ENCODE measurements at regions of chr16 and their contacts with region 1.

Region 1: DNA sequence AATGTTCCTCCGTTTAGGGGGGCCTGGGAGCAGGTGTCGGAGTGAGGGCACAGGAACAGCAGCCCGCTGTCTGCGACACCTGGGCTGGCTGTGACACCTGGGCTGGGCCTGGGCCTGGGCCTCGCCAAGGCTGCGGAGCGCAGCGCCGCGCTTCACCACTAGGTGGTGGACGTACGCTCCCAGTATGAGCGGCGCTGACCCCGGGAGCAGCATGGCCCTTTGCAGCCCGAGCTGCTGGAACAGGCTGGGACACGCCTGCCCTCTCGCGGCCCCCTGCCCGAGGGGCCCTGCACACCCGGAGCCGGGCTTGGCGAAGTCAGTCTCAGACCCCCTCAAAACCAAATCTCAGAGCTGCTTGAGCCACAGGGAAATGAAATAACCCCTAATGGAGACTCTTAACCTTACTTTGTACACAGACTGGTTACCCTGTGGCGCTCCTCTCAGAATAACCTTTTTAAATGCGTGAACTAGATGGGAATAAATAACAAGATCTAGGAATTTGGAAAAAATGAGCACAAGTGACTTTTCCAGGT is 38.6 kb upstream of the FA2H start:
- DNase-seq: peak; percentile 85
- H3K4me3 ChIP-seq: no peak overlapping the region
- H3K27ac ChIP-seq: no peak overlapping the region
- H3K4me1 ChIP-seq: no peaks in the 10 kb centered on the region
- H3K27me3 ChIP-seq: no peaks in the 10 kb centered on the region
- CTCF ChIP-seq: peak; percentile 99

Region 2: GRCh38 chr16:74709441-74709877 is 103.7 kb before region 1 on chr16:
- intact Hi-C with region 1: loop called (anchors 5 kb)
- DNase-seq: peak; percentile 87
- H3K4me3 ChIP-seq: no peak overlapping the region
- H3K27ac ChIP-seq: no peak overlapping the region
- H3K4me1 ChIP-seq: no peaks in the 10 kb centered on the region
- H3K27me3 ChIP-seq: no peaks in the 10 kb centered on the region
- CTCF ChIP-seq: peak; percentile 98

Region 3: DNA sequence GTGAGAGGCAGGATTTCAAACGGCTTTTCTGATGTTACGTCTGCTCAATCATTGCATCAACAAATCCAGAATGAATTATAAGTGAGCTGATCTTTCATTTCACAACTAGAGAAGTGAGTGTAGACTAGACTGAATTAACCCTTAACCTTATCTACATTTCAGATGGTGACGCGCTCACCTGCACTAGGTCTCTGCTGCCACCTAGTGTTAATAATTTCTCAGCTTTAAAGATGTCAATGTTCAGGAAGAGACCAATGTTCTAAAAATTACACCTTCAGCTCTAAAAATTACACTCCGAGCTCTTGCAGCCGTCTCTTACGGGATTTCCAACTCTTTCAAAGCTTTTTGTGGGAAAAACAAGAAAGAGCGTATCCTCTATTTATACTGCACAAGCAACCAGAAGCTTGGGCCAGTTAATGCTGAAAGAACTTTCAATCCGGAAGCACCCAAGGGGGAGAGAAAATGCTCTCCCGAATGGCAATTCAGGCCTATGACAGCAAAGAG is 49.6 kb after region 1 on chr16:
- intact Hi-C with region 1: loop called (anchors 5 kb)
- DNase-seq: no peak
- H3K4me3 ChIP-seq: no peak overlapping the region
- H3K27ac ChIP-seq: no peak overlapping the region
- H3K4me1 ChIP-seq: no peaks in the 10 kb centered on the region
- H3K27me3 ChIP-seq: no peaks in the 10 kb centered on the region
- CTCF ChIP-seq: peak; percentile 83

Region 4: GRCh38 chr16:74909366-74910064 is 96.3 kb after region 1 on chr16:
- intact Hi-C with region 1: no loop called
- DNase-seq: no peak
- H3K4me3 ChIP-seq: no peak overlapping the region
- H3K27ac ChIP-seq: no peak overlapping the region
- H3K4me1 ChIP-seq: no peaks in the 10 kb centered on the region
- H3K27me3 ChIP-seq: no peaks in the 10 kb centered on the region
- CTCF ChIP-seq: no peak

Region 5: GRCh38 chr16:75025761-75026160 is 212.6 kb after region 1 on chr16:
- intact Hi-C with region 1: no loop called
- DNase-seq: no peak
- H3K4me3 ChIP-seq: no peak overlapping the region
- H3K27ac ChIP-seq: no peak overlapping the region
- H3K4me1 ChIP-seq: no peaks in the 10 kb centered on the region
- H3K27me3 ChIP-seq: no peaks in the 10 kb centered on the region
- CTCF ChIP-seq: no peak